Dendritic cell treated with granulocyte-macrophage colony-stimulating factor and Interleukin-4, amounts not matched to agents 40 ng/mL and 50 ng/mL, for 4 days (primary cell): ENCODE measurements at regions of chr1 and their contacts with region 1.

Region 1: GRCh38 chr1:238951809-238952208 is 434.6 kb upstream of the CHRM3 start:
- H3K4me3 Mint-ChIP-seq: no peak overlapping the region
- H3K27ac Mint-ChIP-seq: no peak overlapping the region
- H3K4me1 Mint-ChIP-seq: no peaks in the 10 kb centered on the region
- H3K27me3 Mint-ChIP-seq: no peaks in the 10 kb centered on the region

Region 2: GRCh38 chr1:237851210-237851845 is 1100.5 kb before region 1 on chr1:
- intact Hi-C with region 1: loop called (anchors 5 kb)
- H3K4me3 Mint-ChIP-seq: no peak overlapping the region
- H3K27ac Mint-ChIP-seq: no peak overlapping the region
- H3K4me1 Mint-ChIP-seq: no peaks in the 10 kb centered on the region
- H3K27me3 Mint-ChIP-seq: no peaks in the 10 kb centered on the region

Region 3: DNA sequence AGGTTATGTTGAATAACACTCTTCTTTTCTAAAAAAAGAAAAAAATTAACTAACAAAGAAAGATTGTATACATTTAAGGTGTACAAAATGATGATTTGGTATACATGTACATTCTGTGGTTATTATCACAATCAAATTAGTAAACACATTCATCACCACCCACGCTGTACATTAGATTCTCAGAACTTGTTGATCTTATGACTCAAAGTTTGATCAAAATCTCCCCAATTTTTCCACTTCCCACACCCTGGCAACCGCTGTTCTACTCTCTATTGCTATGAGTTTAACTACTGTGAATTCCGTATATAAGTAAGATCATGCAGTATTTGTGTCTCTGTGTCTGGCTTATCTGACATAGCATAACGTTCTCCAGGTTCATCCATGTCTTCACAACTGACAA is 35.0 kb before region 1 on chr1:
- intact Hi-C with region 1: no loop called
- H3K4me3 Mint-ChIP-seq: no peak overlapping the region
- H3K27ac Mint-ChIP-seq: no peak overlapping the region
- H3K4me1 Mint-ChIP-seq: no peaks in the 10 kb centered on the region
- H3K27me3 Mint-ChIP-seq: no peaks in the 10 kb centered on the region

Region 4: DNA sequence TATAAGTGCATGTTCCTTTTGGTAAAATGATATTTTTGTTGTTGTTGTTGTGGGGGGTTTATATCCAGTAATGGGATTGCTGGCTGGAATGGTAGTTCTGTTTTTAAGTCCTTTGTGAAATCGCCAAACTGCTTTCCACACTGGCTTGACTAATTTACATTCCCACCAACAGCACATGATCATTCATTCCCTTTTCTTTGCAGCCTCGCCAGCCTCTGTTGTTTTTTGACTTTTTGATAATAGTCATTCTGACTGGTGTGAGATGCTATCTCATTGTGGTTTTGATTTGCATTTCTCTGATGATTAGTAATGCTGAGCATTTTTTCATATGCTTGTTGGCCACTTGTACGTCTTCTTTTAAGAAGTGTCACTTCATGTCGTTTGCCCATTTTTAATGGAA is 246.1 kb after region 1 on chr1:
- intact Hi-C with region 1: no loop called
- H3K4me3 Mint-ChIP-seq: no peak overlapping the region
- H3K27ac Mint-ChIP-seq: no peak overlapping the region
- H3K4me1 Mint-ChIP-seq: no peaks in the 10 kb centered on the region
- H3K27me3 Mint-ChIP-seq: no peaks in the 10 kb centered on the region